H1 (cell line): ENCODE measurements at regions of chr13 and their contacts with region 1.

Region 1: GRCh38 chr13:46893798-46894560 is 2.9 kb downstream of the HTR2A start:
- DNase-seq: peak; percentile 10 to 94
- H3K4me3 ChIP-seq: peak overlapping the region; percentile 44 to 68 (median 63)
- H3K27ac ChIP-seq: no peak overlapping the region
- H3K4me1 ChIP-seq: peaks cover 0 to 3% (median under 1%) of the 10 kb centered on the region in 4 experiments; a peak in 3 of 7 replicates
- H3K27me3 ChIP-seq: no peaks in the 10 kb centered on the region
- CTCF ChIP-seq: peak; percentile 66 to 87 (median 72)
- EP300 ChIP-seq: no peak
- POLR2A ChIP-seq: no peak
- RAD21 ChIP-seq: peak; percentile 71 to 74

Region 2: DNA sequence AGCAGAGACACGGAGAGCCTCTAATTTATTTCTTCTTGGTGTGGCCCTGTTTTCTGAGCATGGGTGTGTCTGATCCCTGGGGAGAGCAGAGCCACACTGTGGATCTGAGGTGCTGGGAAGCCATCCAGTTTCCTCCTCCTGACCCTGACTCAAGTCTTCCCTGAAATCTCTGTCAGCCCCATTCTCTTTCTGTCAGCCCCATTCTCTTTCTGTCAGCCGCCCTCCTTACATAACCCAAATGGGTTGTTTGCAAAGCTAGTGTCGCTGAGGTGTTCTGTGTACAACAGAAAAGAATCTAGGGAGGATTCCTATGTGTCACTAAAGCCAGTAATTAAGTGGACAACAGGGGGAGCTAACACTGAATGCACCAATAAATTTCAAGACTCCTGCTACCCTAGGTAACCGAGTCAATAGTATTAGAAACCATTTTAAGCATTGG is 290.8 kb before region 1 on chr13:
- CTCF ChIA-PET with region 1: no interaction called
- POLR2A ChIA-PET with region 1: no interaction called
- DNase-seq: no peak
- H3K4me3 ChIP-seq: no peak overlapping the region
- H3K27ac ChIP-seq: no peak overlapping the region
- H3K4me1 ChIP-seq: peaks cover 0 to 3% (median 0%) of the 10 kb centered on the region in 4 experiments; a peak in 1 of 7 replicates
- H3K27me3 ChIP-seq: no peaks in the 10 kb centered on the region
- CTCF ChIP-seq: peak in 2 of 3 experiments; percentile 25 to 45; a peak in 2 of 4 replicates
- EP300 ChIP-seq: no peak
- POLR2A ChIP-seq: no peak
- RAD21 ChIP-seq: peak; percentile 52

Region 3: GRCh38 chr13:46613409-46614049 is 280.4 kb before region 1 on chr13:
- CTCF ChIA-PET with region 1: no interaction called
- POLR2A ChIA-PET with region 1: no interaction called
- DNase-seq: no peak
- H3K4me3 ChIP-seq: no peak overlapping the region
- H3K27ac ChIP-seq: no peak overlapping the region
- H3K4me1 ChIP-seq: peaks cover 0 to 10% (median 0%) of the 10 kb centered on the region in 4 experiments; a peak in 2 of 7 replicates
- H3K27me3 ChIP-seq: no peaks in the 10 kb centered on the region
- CTCF ChIP-seq: no peak
- EP300 ChIP-seq: no peak
- POLR2A ChIP-seq: no peak
- RAD21 ChIP-seq: no peak

Region 4: DNA sequence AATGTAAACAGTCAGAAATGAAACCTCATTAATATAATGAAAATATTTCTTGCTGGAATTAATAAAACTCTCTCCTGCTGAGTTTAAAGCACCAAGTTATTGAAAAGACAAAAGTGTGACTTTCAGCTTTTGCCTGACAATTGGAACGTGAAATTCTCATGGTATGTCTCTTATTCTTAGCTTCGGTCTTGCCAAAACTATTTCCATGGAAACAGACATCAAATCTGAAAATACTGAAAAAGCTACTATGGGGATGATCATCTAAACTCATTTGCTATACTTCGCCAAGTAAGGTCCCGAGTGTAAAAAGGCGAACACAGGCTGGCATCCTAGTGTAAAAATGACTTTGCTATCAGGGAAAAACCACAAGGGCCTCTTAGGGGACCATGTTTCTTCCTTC is 20.0 kb before region 1 on chr13:
- CTCF ChIA-PET with region 1: interaction called, 18 read pairs
- POLR2A ChIA-PET with region 1: no interaction called
- DNase-seq: no peak
- H3K4me3 ChIP-seq: no peak overlapping the region
- H3K27ac ChIP-seq: no peak overlapping the region
- H3K4me1 ChIP-seq: no peaks in the 10 kb centered on the region
- H3K27me3 ChIP-seq: no peaks in the 10 kb centered on the region
- CTCF ChIP-seq: no peak
- EP300 ChIP-seq: no peak
- POLR2A ChIP-seq: no peak
- RAD21 ChIP-seq: no peak

Region 5: DNA sequence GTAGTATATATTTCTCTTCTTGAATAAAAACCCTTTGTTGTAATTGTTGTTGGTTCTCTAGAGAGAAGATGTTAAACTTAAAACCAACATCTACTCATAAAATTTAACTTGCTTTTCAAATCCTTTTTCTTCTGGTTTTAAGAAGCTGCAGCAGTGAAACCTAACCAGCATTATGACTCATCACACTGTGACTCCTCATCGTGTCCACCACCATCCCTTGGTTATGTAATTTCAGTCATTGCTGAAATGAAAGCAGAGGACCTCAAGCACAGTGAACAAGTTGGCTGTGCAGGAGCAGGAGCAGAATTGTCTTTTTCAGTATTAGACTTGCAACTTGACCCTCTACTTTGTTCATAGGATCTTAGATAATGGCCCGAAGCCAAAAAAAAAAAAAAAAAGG is 67.7 kb after region 1 on chr13:
- CTCF ChIA-PET with region 1: interaction called, 18 read pairs
- POLR2A ChIA-PET with region 1: no interaction called
- DNase-seq: no peak
- H3K4me3 ChIP-seq: no peak overlapping the region
- H3K27ac ChIP-seq: no peak overlapping the region
- H3K4me1 ChIP-seq: no peaks in the 10 kb centered on the region
- H3K27me3 ChIP-seq: no peaks in the 10 kb centered on the region
- CTCF ChIP-seq: no peak
- EP300 ChIP-seq: no peak
- POLR2A ChIP-seq: no peak
- RAD21 ChIP-seq: no peak

Region 6: GRCh38 chr13:47076500-47076899 is 182.5 kb after region 1 on chr13:
- CTCF ChIA-PET with region 1: no interaction called
- POLR2A ChIA-PET with region 1: no interaction called
- DNase-seq: no peak
- H3K4me3 ChIP-seq: no peak overlapping the region
- H3K27ac ChIP-seq: no peak overlapping the region
- H3K4me1 ChIP-seq: no peaks in the 10 kb centered on the region
- H3K27me3 ChIP-seq: no peaks in the 10 kb centered on the region
- CTCF ChIP-seq: no peak
- EP300 ChIP-seq: no peak
- POLR2A ChIP-seq: no peak
- RAD21 ChIP-seq: no peak